ENCODE measurements at regions of chr12 and their contacts with region 1.

Region 1: DNA sequence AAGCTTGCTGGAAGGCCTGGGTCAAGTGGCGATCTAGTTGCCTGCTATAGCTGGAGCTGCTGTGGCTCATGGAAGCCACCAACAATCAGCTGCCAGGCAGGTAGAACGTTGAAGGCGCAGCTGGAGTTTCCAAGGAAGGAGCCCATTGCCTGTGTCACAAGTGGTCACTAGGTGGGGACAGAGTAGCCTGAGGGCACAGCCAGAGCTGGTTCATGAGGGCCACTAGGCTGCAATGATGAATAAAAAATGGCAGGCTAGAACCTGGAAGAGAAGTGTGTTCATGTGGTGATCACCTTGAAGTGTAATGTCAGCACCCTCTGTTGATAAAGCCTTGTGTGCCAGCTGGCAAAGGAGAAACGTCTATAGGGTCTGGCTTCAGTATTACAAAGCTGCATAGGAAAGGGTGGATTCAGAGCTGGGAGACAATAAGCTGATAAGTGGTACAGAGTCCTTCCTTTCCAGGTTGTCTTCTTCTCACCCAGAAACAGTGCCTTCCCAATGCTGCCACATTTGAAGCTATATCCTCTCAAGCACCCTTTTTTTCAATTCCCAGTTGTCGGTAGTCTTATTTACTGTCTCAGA is 165.8 kb downstream of the EMP1 start:
- DNase-seq: no peak
- ATAC-seq: peak; percentile 100
- H3K4me3 ChIP-seq: no peak overlapping the region
- H3K27ac ChIP-seq: no peak overlapping the region
- H3K4me1 ChIP-seq: no peaks in the 10 kb centered on the region
- H3K27me3 ChIP-seq: peaks cover 0 to 3% of the 10 kb centered on the region in 2 experiments; a peak in 1 of 4 replicates
- CTCF ChIP-seq: peak; percentile 71 to 94 (median 91)
- EP300 ChIP-seq: no peak
- POLR2A ChIP-seq: no peak
- RAD21 ChIP-seq: peak; percentile 80

Region 2: DNA sequence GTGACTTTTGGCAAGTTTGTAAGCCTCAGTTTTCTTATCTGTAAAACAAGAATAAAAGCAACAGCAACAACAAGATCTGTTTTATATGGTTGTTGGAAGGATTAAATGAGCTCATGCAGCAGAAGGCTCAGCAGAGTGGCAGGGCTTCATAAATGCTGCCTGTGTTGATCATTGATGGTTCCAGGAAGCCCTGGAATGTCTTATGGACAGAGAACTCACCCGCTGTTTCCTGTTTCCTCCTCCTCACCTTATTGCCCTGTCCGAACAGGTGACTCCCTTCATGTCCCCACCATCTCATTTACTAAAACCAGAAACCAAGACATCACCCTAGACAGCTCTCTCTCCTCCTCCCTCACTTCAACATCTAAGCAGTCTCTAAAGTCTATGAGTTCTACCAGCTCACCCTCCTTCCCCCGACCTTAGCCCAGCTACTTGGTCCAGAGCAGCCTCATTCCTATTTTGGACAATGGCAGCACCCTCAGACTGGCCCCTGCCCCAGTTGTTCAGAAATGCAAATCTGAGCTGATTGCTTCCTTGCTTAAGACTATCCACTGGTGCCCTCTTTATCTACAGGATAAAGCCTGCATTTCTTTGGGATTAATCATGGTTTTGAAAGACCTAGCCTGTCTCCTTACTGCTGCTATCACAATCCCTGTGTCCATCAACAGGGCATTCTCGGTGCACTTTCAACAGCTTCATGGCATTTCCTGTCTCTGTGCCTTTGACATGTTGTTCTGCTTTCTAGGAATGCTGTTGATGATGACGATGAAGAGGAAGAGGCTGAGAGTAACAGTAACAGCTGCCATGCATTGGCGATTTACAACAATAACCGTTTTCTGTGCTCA is 237.5 kb before region 1 on chr12:
- CTCF ChIA-PET with region 1: no interaction called
- POLR2A ChIA-PET with region 1: no interaction called
- RAD21 ChIA-PET with region 1: no interaction called
- SMC1A ChIA-PET with region 1: no interaction called
- in situ Hi-C with region 1: no loop called
- intact Hi-C with region 1: no loop called
- DNase-seq: no peak
- ATAC-seq: no peak
- H3K4me3 ChIP-seq: no peak overlapping the region
- H3K27ac ChIP-seq: no peak overlapping the region
- H3K4me1 ChIP-seq: no peaks in the 10 kb centered on the region
- H3K27me3 ChIP-seq: peaks cover 0 to 7% of the 10 kb centered on the region in 2 experiments; a peak in 2 of 4 replicates
- CTCF ChIP-seq: no peak
- EP300 ChIP-seq: no peak
- POLR2A ChIP-seq: no peak
- RAD21 ChIP-seq: no peak

Region 3: GRCh38 chr12:13255792-13256691 is 106.3 kb before region 1 on chr12:
- CTCF ChIA-PET with region 1: interaction called, 13 read pairs
- POLR2A ChIA-PET with region 1: no interaction called
- RAD21 ChIA-PET with region 1: no interaction called
- SMC1A ChIA-PET with region 1: interaction called, 6 read pairs
- in situ Hi-C with region 1: no loop called
- intact Hi-C with region 1: no loop called
- DNase-seq: peak; percentile 28
- ATAC-seq: peak; percentile 100
- H3K4me3 ChIP-seq: no peak overlapping the region
- H3K27ac ChIP-seq: no peak overlapping the region
- H3K4me1 ChIP-seq: no peaks in the 10 kb centered on the region
- H3K27me3 ChIP-seq: 0 out of 4 replicates have a peak, but pooled peaks cover 1 to 5% of the 10 kb centered on the region in 2 experiments
- CTCF ChIP-seq: peak; percentile 89 to 98 (median 94)
- EP300 ChIP-seq: no peak
- POLR2A ChIP-seq: no peak
- RAD21 ChIP-seq: peak; percentile 65

Region 4: DNA sequence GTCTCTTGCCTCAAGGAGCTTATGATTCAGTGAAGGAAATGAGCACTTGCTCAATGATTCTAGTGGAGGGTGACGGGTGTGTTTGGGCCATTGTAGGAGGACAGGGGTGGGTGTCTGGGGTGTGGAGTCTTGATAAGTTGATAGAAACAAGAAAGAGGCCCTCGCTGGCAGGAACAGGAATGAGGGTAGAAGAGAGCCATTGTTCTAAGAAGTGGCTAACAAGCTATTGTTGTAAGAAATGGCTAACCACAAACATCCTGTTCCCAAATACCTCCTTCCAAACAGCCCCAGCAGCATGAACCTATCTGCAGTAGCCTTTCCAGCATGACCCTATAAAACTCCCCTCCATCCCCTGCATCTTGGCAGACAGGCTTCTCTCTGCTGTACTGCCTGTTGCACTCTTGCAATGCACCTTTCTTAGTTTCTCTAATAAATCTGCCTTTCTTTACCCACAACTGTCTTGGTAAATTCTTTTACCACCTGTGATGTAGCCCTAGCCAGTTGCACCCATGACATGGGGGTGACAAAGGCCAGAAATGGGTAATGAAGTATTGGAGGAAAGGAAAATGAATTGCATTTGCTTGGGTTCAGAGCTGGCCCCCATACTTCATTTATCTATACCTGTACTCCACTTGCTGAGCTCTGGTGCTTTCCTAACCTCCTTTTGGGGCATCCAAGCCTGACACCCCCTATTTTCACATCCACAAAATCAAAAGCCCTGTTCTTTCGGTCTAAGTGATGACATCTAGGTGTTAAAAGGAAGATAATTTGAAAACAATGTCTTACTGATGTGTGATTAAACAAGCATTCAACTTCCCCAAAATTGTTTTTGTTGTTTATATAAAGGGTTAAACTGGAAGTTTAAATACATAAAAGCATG is 230.0 kb after region 1 on chr12:
- CTCF ChIA-PET with region 1: interaction called, 5 read pairs
- POLR2A ChIA-PET with region 1: no interaction called
- RAD21 ChIA-PET with region 1: interaction called, 6 read pairs
- SMC1A ChIA-PET with region 1: no interaction called
- in situ Hi-C with region 1: no loop called
- intact Hi-C with region 1: loop called (anchors 2 kb)
- DNase-seq: peak; percentile 51
- ATAC-seq: peak; percentile 86
- H3K4me3 ChIP-seq: no peak overlapping the region
- H3K27ac ChIP-seq: no peak overlapping the region; the same call in 1 of the 2 replicates
- H3K4me1 ChIP-seq: no peaks in the 10 kb centered on the region; the same call in 1 of the 2 replicates
- H3K27me3 ChIP-seq: no peaks in the 10 kb centered on the region
- CTCF ChIP-seq: no peak
- EP300 ChIP-seq: peak; percentile 72 to 81; a peak in 3 of 4 replicates
- POLR2A ChIP-seq: no peak
- RAD21 ChIP-seq: no peak

Region 5: GRCh38 chr12:13661005-13661887 is 298.9 kb after region 1 on chr12:
- CTCF ChIA-PET with region 1: interaction called, 69 read pairs
- POLR2A ChIA-PET with region 1: no interaction called
- RAD21 ChIA-PET with region 1: interaction called, 38 read pairs
- SMC1A ChIA-PET with region 1: interaction called, 29 read pairs
- in situ Hi-C with region 1: loop called (anchors 5 kb)
- intact Hi-C with region 1: loop called (anchors 1 kb)
- DNase-seq: peak; percentile 3
- ATAC-seq: peak; percentile 93
- H3K4me3 ChIP-seq: no peak overlapping the region
- H3K27ac ChIP-seq: no peak overlapping the region
- H3K4me1 ChIP-seq: no peaks in the 10 kb centered on the region
- H3K27me3 ChIP-seq: 0 out of 4 replicates have a peak, but pooled peaks cover 0 to 4% of the 10 kb centered on the region in 2 experiments
- CTCF ChIP-seq: peak; percentile 82 to 88 (median 83)
- EP300 ChIP-seq: no peak
- POLR2A ChIP-seq: no peak
- RAD21 ChIP-seq: peak; percentile 80

Region 6: DNA sequence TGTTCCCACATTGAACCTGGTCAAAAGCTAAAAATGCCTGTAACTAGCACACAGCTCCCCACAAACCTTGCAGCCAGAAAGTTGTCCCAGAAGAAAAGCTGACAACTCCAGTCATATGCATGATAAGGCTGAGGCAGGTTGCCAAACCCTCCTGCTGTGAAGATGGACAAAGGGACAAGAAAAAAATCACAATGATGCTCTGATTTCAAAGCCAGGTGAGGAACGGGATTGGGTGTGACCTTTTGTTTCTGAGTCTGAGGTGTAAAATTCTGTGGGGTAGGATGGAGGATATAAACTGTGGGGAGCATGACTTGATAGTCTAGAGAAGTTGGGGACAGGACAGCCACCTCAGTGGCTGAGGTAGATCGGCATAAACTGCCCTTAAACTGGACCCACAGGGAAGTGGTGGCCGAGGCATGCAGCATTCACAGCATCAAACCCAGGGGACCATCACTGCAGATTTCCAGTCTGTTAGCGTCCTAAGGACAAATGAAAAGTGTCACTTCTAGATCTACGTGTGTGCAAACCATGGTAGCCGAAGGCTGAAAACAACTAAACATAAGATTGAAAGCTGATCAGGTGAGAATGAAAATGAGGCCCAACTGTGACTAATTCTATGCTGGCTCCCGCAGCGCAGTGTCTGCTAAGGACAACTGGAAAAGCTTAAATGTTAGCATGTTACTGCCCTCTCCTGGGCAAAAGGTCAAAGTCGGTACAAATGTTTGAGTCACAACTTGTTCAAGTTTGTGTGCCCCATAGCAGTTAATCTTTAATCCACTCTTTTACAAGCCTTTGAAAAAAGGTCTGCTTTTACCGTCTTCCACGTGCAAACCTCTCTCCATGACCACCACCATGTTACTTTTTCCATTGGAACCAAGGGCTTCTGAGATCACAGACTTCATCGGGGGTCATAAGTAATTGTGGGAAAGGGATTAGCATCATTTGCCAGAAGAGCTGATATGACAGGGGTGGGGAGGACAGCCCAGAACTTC is 579.2 kb after region 1 on chr12:
- CTCF ChIA-PET with region 1: interaction called, 14 read pairs
- POLR2A ChIA-PET with region 1: no interaction called
- RAD21 ChIA-PET with region 1: interaction called, 9 read pairs
- SMC1A ChIA-PET with region 1: interaction called, 10 read pairs
- in situ Hi-C with region 1: no loop called
- intact Hi-C with region 1: loop called (anchors 1 kb)
- DNase-seq: no peak
- ATAC-seq: peak; percentile 92
- H3K4me3 ChIP-seq: no peak overlapping the region
- H3K27ac ChIP-seq: no peak overlapping the region
- H3K4me1 ChIP-seq: no peaks in the 10 kb centered on the region
- H3K27me3 ChIP-seq: peaks cover 0 to 3% of the 10 kb centered on the region in 2 experiments; a peak in 1 of 4 replicates
- CTCF ChIP-seq: peak; percentile 28 to 72 (median 53); a peak in 5 of 6 replicates
- EP300 ChIP-seq: no peak
- POLR2A ChIP-seq: no peak
- RAD21 ChIP-seq: peak; percentile 63

Measured in GM12878 (cell line).